GM10248 (cell line): ENCODE measurements at regions of chr1 and their contacts with region 1.

Region 1: GRCh38 chr1:157156058-157156541 is 17.9 kb upstream of the ETV3 start:
- DNase-seq: peak; percentile 75
- CTCF ChIP-seq: peak; percentile 88

Region 2: GRCh38 chr1:157105988-157106812 is 49.9 kb before region 1 on chr1:
- CTCF ChIA-PET with region 1: interaction called, 83 read pairs
- POLR2A ChIA-PET with region 1: no interaction called
- DNase-seq: peak; percentile 87
- CTCF ChIP-seq: no peak

Region 3: GRCh38 chr1:157117527-157118057 is 38.5 kb before region 1 on chr1:
- CTCF ChIA-PET with region 1: interaction called, 20 read pairs
- POLR2A ChIA-PET with region 1: no interaction called
- DNase-seq: peak; percentile 70
- CTCF ChIP-seq: no peak

Region 4: GRCh38 chr1:157138220-157139051 is 17.7 kb before region 1 on chr1 and contains the start of gene ETV3:
- CTCF ChIA-PET with region 1: interaction called, 78 read pairs
- POLR2A ChIA-PET with region 1: no interaction called
- DNase-seq: peak; percentile 93
- CTCF ChIP-seq: no peak

Region 5: GRCh38 chr1:157176591-157177121 is 20.6 kb after region 1 on chr1:
- CTCF ChIA-PET with region 1: interaction called, 42 read pairs
- POLR2A ChIA-PET with region 1: no interaction called
- DNase-seq: peak; percentile 41
- CTCF ChIP-seq: no peak

Region 6: GRCh38 chr1:157233131-157233530 is 77.0 kb after region 1 on chr1:
- CTCF ChIA-PET with region 1: no interaction called
- POLR2A ChIA-PET with region 1: no interaction called
- DNase-seq: no peak
- CTCF ChIP-seq: no peak

Region 7: DNA sequence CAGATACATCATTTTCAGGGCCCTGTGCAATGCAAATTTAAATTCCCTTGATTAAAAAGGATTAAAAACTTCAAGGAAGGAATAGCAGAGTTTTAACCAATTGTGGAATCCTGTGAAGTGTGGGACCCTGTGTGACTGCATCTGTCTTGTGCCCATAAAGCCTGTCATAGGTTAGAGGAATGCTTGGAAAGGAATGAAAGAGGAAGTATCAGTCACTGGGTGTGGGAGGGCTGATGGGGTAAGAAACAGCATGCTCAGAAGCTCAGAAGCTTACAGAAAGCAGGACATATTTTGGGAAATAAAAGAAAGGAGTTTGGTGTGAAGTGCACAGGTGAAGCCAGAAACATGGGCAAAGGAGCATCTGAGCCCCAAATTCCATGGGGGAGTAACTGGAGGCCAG is 132.9 kb after region 1 on chr1:
- CTCF ChIA-PET with region 1: no interaction called
- POLR2A ChIA-PET with region 1: no interaction called
- DNase-seq: no peak
- CTCF ChIP-seq: no peak